Right ventricle myocardium inferior (tissue), 1 donor: ENCODE measurements at regions of chr6 and their contacts with region 1.

Region 1: GRCh38 chr6:32118782-32119628 is 9.0 kb downstream of the ATF6B start:
- DNase-seq: peak; percentile 92
- ATAC-seq: peak; percentile 73

Region 2: DNA sequence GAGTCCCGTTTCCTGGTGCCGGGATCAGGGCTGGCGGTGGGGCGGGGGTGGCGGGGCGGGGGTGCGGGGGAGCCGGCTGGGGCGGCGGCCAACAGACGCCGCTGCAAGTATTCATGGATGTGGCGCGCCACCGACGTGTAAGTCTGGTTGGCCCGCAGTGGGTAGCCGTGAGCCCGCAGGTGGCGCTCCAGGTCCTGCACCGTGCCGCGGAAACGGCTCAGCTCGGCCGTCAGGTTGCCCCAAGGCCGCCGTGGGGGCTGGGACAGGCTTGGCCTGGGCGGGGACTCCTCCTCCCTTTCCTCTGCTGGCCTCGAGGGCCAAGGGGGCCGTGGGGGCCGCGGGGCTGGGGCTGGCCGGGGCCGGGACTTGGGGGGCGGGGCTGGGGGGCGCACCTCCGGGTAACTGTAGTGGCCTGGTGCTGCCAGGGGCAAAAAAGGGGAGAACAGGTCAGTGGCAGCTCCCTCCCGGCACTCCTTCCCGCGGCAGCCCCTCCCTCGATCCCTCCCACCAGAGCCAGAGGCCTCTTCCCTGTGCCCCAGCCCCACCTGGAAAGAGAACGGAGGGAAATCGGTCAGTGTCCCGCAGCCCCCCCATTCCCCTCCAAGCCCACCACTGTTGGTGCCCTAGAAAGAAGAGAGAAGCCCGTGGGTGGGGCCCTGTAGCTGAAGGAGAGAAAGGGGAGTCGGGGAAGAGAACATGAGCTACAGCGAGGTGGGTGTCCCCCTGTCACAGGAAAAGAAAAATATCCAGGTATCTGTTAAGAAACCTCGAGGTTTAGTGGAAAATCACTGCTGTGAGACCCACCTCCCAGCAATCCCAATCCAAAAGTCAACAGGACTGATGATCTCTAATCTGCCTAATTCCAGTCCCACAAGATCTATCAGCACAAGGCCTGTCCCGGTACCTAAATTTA is 31.2 kb before region 1 on chr6:
- intact Hi-C with region 1: loop called (anchors 1 kb)
- DNase-seq: peak; percentile 90
- ATAC-seq: peak; percentile 83

Region 3: DNA sequence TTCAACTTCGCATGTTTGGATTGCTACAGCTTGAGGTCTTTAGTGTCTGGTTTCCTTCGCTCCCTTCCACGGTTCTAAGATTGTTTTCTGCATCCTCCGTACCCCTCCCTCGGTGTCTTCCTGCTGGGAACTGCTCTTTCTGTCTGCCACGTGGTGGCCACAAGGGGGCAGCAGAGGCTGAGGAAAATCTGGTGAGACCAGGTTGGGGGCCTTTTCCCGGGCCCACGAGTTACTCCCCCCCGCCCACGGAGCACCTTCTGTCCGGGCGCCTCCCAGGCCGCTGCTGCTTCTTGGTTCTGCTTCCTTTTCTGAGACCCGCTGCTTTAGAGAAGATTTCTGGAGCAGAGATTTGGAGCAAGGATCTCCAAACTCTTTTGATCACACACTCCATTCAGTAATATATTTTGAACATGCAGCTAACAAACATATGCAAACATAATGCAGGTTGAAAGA is 126.0 kb after region 1 on chr6:
- intact Hi-C with region 1: loop called (anchors 10 kb)
- DNase-seq: peak; percentile 84
- ATAC-seq: peak; percentile 86